A673 (cell line): ENCODE measurements at regions of chr4 and their contacts with region 1.

Region 1: GRCh38 chr4:184355111-184355604 is 119.2 kb downstream of the IRF2 start:
- DNase-seq: peak; percentile 98
- H3K4me3 ChIP-seq: no peak overlapping the region
- H3K27ac ChIP-seq: peak overlapping the region; percentile 93
- H3K4me1 ChIP-seq: peaks cover 57% of the 10 kb centered on the region
- H3K27me3 ChIP-seq: no peaks in the 10 kb centered on the region
- CTCF ChIP-seq: no peak

Region 2: DNA sequence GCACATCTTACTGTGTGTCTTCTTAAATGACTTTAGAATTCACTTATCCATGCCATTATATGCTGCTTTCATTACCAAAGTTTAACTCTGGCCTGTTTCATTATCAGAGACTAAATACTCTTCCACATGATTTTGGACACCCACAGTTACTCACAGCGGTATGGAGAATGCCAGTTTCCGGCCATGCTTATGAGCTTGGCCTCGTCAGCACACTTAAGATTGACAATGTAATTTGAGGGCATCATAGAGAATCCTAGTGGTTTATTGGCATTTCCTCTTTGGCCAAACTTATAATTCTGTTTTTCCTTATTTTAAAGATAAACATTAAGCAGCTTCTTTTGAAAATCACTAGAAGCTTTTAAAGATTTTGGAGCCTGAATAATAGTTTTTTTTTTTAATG is 14.7 kb after region 1 on chr4:
- CTCF ChIA-PET with region 1: interaction called, 12 read pairs
- POLR2A ChIA-PET with region 1: interaction called, 8 read pairs
- intact Hi-C with region 1: loop called (anchors 1 kb)
- DNase-seq: peak; percentile 99
- H3K4me3 ChIP-seq: no peak overlapping the region
- H3K27ac ChIP-seq: peak overlapping the region; percentile 99
- H3K4me1 ChIP-seq: peaks cover 60% of the 10 kb centered on the region
- H3K27me3 ChIP-seq: no peaks in the 10 kb centered on the region
- CTCF ChIP-seq: no peak

Region 3: DNA sequence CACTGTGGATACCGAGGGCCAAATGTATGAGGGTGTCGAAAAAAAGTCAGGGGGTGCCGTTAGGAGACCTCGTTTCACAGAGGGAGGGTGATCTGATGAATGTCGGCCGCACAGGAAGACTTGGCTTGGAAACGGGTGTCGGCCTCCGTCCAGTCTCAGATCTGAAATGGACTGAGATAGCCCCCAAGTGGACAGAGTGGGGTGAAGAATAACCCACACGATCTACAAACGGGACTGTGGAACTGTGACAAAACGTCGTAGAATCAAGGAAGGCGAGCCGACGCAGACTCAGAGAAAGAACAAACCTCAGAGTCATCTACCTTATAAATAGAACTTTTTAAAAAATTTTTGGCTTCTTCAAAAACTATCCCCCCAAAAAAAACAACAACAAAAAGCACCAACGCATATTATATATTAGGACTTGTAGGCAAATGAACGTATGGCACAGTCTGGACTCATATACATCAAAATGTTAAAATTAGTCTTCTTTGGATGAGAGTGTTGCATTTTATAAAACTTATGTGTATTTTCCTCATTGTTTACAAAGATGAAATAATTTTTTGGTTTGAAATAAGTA is 183.0 kb after region 1 on chr4:
- CTCF ChIA-PET with region 1: no interaction called
- POLR2A ChIA-PET with region 1: no interaction called
- intact Hi-C with region 1: loop called (anchors 5 kb)
- DNase-seq: peak; percentile 90
- H3K4me3 ChIP-seq: peak overlapping the region; percentile 78
- H3K27ac ChIP-seq: peak overlapping the region; percentile 92
- H3K4me1 ChIP-seq: peaks cover 20% of the 10 kb centered on the region
- H3K27me3 ChIP-seq: no peaks in the 10 kb centered on the region
- CTCF ChIP-seq: peak; percentile 65